ENCODE measurements at regions of chr11 and their contacts with region 1.

Region 1: GRCh38 chr11:128695539-128696221 is 1.8 kb downstream of the FLI1 start:
- DNase-seq: peak; percentile 38
- H3K4me3 Mint-ChIP-seq: peak overlapping the region; percentile 87
- H3K27ac Mint-ChIP-seq: peak overlapping the region; percentile 91
- H3K4me1 Mint-ChIP-seq: peaks cover 74% of the 10 kb centered on the region
- H3K27me3 Mint-ChIP-seq: peaks cover 15% of the 10 kb centered on the region

Region 2: GRCh38 chr11:128226106-128226716 is 469.5 kb before region 1 on chr11:
- intact Hi-C with region 1: loop called (anchors 5 kb)
- DNase-seq: no peak
- H3K4me3 Mint-ChIP-seq: peak overlapping the region; percentile 37
- H3K27ac Mint-ChIP-seq: peak overlapping the region; percentile 89
- H3K4me1 Mint-ChIP-seq: peaks cover 44% of the 10 kb centered on the region
- H3K27me3 Mint-ChIP-seq: no peaks in the 10 kb centered on the region

Region 3: DNA sequence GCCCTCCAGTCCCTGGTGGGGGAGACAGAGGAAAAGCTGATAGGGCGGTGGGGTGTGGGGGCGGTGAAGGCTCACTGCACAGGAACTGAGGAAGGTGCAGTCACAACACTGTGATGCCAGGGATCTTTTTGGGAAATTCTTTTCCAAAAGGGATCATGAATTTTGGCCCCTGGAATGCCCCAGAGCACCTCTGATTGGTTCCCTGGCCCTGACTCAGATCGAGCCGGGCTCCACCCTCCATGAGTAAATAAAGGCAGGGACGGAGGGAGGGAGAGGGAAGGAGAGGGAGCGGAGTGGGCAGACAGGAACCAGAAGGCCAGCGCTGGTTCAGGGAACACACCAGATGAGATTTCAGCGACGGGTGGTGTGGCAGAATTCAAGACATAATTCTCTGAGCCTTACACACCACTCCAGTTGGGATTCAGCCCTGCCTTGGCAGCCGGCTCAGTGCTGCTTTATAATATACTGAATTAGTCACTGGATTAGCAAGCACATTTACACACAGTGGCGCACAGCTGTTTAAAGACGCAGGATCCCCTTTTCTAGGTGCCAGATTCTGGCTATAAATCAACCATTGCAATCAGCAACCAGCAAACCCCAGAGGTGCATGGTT is 188.6 kb before region 1 on chr11:
- intact Hi-C with region 1: loop called (anchors 2 kb)
- DNase-seq: no peak
- H3K4me3 Mint-ChIP-seq: peak overlapping the region; percentile 96
- H3K27ac Mint-ChIP-seq: peak overlapping the region; percentile 98
- H3K4me1 Mint-ChIP-seq: peaks cover 100% of the 10 kb centered on the region
- H3K27me3 Mint-ChIP-seq: peaks cover 1% of the 10 kb centered on the region

Region 4: GRCh38 chr11:128707681-128708080 is 12.0 kb after region 1 on chr11:
- intact Hi-C with region 1: loop called (anchors 1 kb)
- DNase-seq: no peak
- H3K4me3 Mint-ChIP-seq: no peak overlapping the region
- H3K27ac Mint-ChIP-seq: no peak overlapping the region
- H3K4me1 Mint-ChIP-seq: peaks cover 68% of the 10 kb centered on the region
- H3K27me3 Mint-ChIP-seq: no peaks in the 10 kb centered on the region

Region 5: GRCh38 chr11:128733440-128734102 is 37.9 kb after region 1 on chr11:
- intact Hi-C with region 1: loop called (anchors 1 kb)
- DNase-seq: no peak
- H3K4me3 Mint-ChIP-seq: peak overlapping the region; percentile 65
- H3K27ac Mint-ChIP-seq: peak overlapping the region; percentile 71
- H3K4me1 Mint-ChIP-seq: peaks cover 97% of the 10 kb centered on the region
- H3K27me3 Mint-ChIP-seq: no peaks in the 10 kb centered on the region

Region 6: GRCh38 chr11:128831174-128832120 is 135.8 kb after region 1 on chr11:
- intact Hi-C with region 1: loop called (anchors 2 kb)
- DNase-seq: peak; percentile 75
- H3K4me3 Mint-ChIP-seq: peak overlapping the region; percentile 68
- H3K27ac Mint-ChIP-seq: peak overlapping the region; percentile 90
- H3K4me1 Mint-ChIP-seq: peaks cover 31% of the 10 kb centered on the region
- H3K27me3 Mint-ChIP-seq: peaks cover 9% of the 10 kb centered on the region